ENCODE measurements at regions of chr2 and their contacts with region 1.

Region 1: GRCh38 chr2:70142590-70143313 is 48.1 kb downstream of the C2orf42 start:
- DNase-seq: peak; percentile 99
- H3K4me3 Mint-ChIP-seq: peak overlapping the region; percentile 76
- H3K27ac Mint-ChIP-seq: peak overlapping the region; percentile 89
- H3K4me1 Mint-ChIP-seq: peaks cover 24% of the 10 kb centered on the region
- H3K27me3 Mint-ChIP-seq: no peaks in the 10 kb centered on the region
- CTCF ChIP-seq: peak; percentile 90

Region 2: DNA sequence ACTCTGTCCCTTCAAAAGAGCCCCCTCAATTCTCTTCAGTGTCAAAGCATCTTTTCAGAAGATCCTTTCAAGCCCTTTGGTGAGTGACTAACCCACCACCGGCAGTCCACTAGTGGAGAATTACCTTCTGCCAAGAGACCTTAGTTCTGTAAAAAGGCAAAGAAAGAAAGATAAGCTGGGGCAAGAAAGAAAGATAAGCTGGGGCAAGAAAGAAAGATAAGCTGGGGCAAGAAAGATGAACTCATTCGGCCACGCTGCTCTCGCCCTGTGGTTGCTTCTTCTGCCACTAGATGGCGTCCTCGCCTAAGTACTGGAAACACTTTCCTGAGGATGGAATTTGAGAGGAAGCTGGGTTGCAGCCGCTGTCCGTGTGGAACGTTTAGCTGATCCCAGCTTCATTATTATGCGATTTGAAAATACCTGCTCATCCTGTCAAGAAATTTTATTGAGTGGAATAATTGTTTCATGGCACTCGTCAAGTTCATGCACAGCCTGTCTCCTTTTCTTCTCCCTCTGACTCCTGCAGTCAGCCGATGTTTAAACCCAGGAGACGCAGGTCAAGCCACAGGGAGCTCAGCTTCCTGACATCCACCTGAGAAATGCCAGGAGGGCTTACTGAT is 418.1 kb before region 1 on chr2:
- CTCF ChIA-PET with region 1: no interaction called
- POLR2A ChIA-PET with region 1: no interaction called
- intact Hi-C with region 1: loop called (anchors 5 kb)
- DNase-seq: peak; percentile 81
- H3K4me3 Mint-ChIP-seq: peak overlapping the region; percentile 37
- H3K27ac Mint-ChIP-seq: no peak overlapping the region
- H3K4me1 Mint-ChIP-seq: peaks cover 5% of the 10 kb centered on the region
- H3K27me3 Mint-ChIP-seq: no peaks in the 10 kb centered on the region
- CTCF ChIP-seq: peak; percentile 93

Region 3: GRCh38 chr2:69997015-69997830 is 145.5 kb before region 1 on chr2:
- CTCF ChIA-PET with region 1: no interaction called
- POLR2A ChIA-PET with region 1: interaction called, 3 read pairs
- intact Hi-C with region 1: loop called (anchors 1 kb)
- DNase-seq: peak; percentile 84
- H3K4me3 Mint-ChIP-seq: peak overlapping the region; percentile 41
- H3K27ac Mint-ChIP-seq: peak overlapping the region; percentile 6
- H3K4me1 Mint-ChIP-seq: peaks cover 18% of the 10 kb centered on the region
- H3K27me3 Mint-ChIP-seq: no peaks in the 10 kb centered on the region
- CTCF ChIP-seq: no peak

Region 4: DNA sequence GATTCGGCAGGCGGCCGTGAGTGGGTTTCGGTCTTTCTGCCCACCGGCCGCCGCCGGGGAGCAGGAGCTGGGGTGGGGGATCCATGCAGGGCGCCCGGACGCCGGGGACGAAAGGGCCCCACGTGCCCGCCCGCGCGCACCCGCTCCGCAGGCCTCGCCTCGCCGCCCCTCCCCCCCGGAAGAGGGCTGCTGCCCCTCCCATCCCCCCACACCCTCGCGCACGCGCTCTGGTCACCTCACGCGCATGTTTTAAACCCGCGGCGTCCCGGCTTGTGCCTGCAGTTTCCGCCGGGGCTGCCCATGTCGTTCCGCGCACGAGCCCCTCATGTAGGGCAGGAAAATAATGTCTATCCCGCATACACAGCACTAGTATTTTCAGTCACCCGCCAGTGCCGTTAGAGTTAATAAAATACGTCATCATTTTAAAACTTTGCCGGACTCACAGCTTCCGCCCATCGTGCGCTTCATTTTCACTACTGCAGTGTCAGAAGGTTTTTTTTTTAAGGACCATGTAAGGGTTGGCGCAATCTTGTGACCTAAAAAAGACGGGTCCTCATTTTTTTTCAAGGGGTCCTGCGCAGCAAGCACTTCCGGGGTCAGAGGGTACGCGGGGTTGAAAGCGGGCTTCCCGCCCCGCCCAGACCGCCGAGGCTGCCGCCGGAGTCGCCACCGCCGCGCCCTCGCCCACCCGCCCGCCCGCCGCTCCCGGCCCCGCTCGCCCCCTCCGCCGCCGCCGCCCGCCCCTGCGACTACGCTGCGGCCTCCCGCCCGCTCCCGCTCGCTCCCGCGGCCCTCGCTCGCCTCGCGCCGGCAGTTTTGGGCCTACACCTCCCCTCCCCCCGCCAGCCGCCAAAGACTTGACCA is 55.7 kb before region 1 on chr2 and contains the start of gene PCBP1:
- CTCF ChIA-PET with region 1: interaction called, 5 read pairs
- POLR2A ChIA-PET with region 1: interaction called, 328 read pairs
- intact Hi-C with region 1: loop called (anchors 1 kb)
- DNase-seq: peak; percentile 91
- H3K4me3 Mint-ChIP-seq: peak within 1 kb of the TSS; percentile 94
- H3K27ac Mint-ChIP-seq: peak within 1 kb of the TSS; percentile 100
- H3K4me1 Mint-ChIP-seq: peaks cover 38% of the 10 kb centered on the region
- H3K27me3 Mint-ChIP-seq: no peaks in the 10 kb centered on the region
- CTCF ChIP-seq: no peak
- total RNA-seq, gene PCBP1: 259 and 277 TPM in 2 replicates

Region 5: GRCh38 chr2:70124983-70125480 is 17.7 kb before region 1 on chr2:
- CTCF ChIA-PET with region 1: interaction called, 7 read pairs
- POLR2A ChIA-PET with region 1: interaction called, 19 read pairs
- intact Hi-C with region 1: no loop called
- DNase-seq: peak; percentile 30
- H3K4me3 Mint-ChIP-seq: peak overlapping the region; percentile 76
- H3K27ac Mint-ChIP-seq: peak overlapping the region; percentile 95
- H3K4me1 Mint-ChIP-seq: peaks cover 21% of the 10 kb centered on the region
- H3K27me3 Mint-ChIP-seq: no peaks in the 10 kb centered on the region
- CTCF ChIP-seq: no peak

Region 6: GRCh38 chr2:70190418-70191243 is 47.9 kb after region 1 on chr2 and contains the start of gene C2orf42:
- CTCF ChIA-PET with region 1: no interaction called
- POLR2A ChIA-PET with region 1: interaction called, 26 read pairs
- intact Hi-C with region 1: no loop called
- DNase-seq: peak; percentile 97
- H3K4me3 Mint-ChIP-seq: peak within 1 kb of the TSS; percentile 80
- H3K27ac Mint-ChIP-seq: peak within 1 kb of the TSS; percentile 97
- H3K4me1 Mint-ChIP-seq: peaks cover 5% of the 10 kb centered on the region
- H3K27me3 Mint-ChIP-seq: no peaks in the 10 kb centered on the region
- CTCF ChIP-seq: no peak
- total RNA-seq, gene C2orf42: 17.6 and 28.5 TPM in 2 replicates